CD14-positive monocyte (primary cell): ENCODE measurements at regions of chr19 and their contacts with region 1.

Region 1: GRCh38 chr19:28466107-28467045 is 746.6 kb downstream of the UQCRFS1 start:
- DNase-seq: peak; percentile 50 to 57 (median 55)
- H3K4me3 ChIP-seq: no peak overlapping the region
- H3K4me3 Mint-ChIP-seq: no peak overlapping the region
- H3K27ac ChIP-seq: no peak overlapping the region
- H3K27ac Mint-ChIP-seq: peak overlapping the region in 1 of 7 donors; percentile 24
- H3K4me1 ChIP-seq: peaks cover 14 to 20% of the 10 kb centered on the region in 2 donors
- H3K4me1 Mint-ChIP-seq: peaks cover 27% of the 10 kb centered on the region
- H3K27me3 ChIP-seq: peaks cover 0 to 5% of the 10 kb centered on the region in 2 donors
- H3K27me3 Mint-ChIP-seq: peaks cover 5 to 7% (median 5%) of the 10 kb centered on the region in 3 donors
- CTCF ChIP-seq: peak; percentile 88

Region 2: DNA sequence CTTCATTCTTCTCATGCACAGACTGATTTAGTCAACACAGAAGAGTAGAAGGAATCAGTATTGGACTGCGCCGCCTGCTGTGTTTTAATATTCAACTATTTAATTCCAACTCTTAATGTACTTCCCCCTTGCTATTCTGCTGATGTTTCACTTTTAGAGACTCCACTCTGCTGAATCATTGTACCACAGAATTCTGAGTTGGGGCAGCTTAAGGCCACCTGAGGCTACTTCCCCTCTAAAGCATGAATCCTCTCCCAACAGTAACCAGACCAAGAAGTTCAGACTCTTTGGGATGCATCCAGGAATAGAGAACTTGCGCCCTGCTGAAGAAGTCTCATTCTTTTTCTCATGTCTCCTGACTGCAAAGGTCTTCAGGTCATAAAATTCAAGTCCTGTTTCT is 37.8 kb after region 1 on chr19:
- intact Hi-C with region 1: loop called in 1 of 2 experiments (anchors 5 kb)
- DNase-seq: peak; percentile 32 to 59 (median 54)
- H3K4me3 ChIP-seq: no peak overlapping the region
- H3K4me3 Mint-ChIP-seq: peak overlapping the region in 1 of 2 donors; percentile 40
- H3K27ac ChIP-seq: no peak overlapping the region
- H3K27ac Mint-ChIP-seq: peak overlapping the region in 4 of 7 donors; percentile 7 to 71 (median 38)
- H3K4me1 ChIP-seq: peaks cover 53 to 55% of the 10 kb centered on the region in 2 donors
- H3K4me1 Mint-ChIP-seq: peaks cover 56% of the 10 kb centered on the region
- H3K27me3 ChIP-seq: no peaks in the 10 kb centered on the region
- H3K27me3 Mint-ChIP-seq: peaks cover 4 to 6% (median 5%) of the 10 kb centered on the region in 3 donors
- CTCF ChIP-seq: no peak

Region 3: DNA sequence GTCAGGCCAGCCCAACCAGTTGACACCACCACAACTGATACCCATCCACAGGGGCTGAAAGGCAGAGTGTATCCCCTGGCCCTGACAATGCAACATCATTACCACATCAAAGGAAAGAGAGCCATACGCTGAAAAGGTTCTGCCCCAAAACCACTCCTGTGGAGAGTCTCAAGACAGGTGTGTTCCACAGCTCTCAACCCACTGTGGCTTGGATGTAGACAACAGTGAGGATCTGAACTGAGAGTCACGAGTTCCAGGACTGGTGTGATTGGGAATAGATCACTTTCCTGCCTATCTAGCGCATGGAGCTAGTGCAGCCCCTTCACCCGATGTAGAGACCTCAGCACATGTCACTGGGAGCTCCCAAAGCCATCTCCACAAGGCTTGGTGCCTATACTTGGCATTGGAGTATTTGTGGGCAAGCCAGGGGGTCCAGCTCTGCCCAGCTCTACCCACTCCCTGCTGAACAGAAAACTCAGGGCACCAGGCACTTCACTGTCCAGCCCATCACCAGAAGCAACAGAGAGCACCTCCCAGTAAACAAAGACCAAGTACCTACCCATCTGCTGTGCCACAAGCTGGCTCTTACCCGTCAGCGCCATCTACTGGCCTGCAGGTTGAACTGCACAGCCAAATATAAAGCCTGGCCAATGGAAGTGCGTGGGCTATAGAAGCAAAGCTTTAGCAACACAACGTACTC is 167.1 kb after region 1 on chr19:
- intact Hi-C with region 1: loop called (anchors 2 to 5 kb)
- DNase-seq: peak; percentile 31 to 57 (median 52)
- H3K4me3 ChIP-seq: no peak overlapping the region
- H3K4me3 Mint-ChIP-seq: no peak overlapping the region
- H3K27ac ChIP-seq: no peak overlapping the region
- H3K27ac Mint-ChIP-seq: no peak overlapping the region
- H3K4me1 ChIP-seq: no peaks in the 10 kb centered on the region
- H3K4me1 Mint-ChIP-seq: no peaks in the 10 kb centered on the region
- H3K27me3 ChIP-seq: no peaks in the 10 kb centered on the region
- H3K27me3 Mint-ChIP-seq: peaks cover 0 to 5% (median 2%) of the 10 kb centered on the region in 3 donors
- CTCF ChIP-seq: peak; percentile 98

Region 4: GRCh38 chr19:28705008-28705407 is 238.6 kb after region 1 on chr19:
- intact Hi-C with region 1: loop called (anchors 2 to 5 kb)
- DNase-seq: no peak
- H3K4me3 ChIP-seq: no peak overlapping the region
- H3K4me3 Mint-ChIP-seq: no peak overlapping the region
- H3K27ac ChIP-seq: no peak overlapping the region
- H3K27ac Mint-ChIP-seq: no peak overlapping the region
- H3K4me1 ChIP-seq: no peaks in the 10 kb centered on the region
- H3K4me1 Mint-ChIP-seq: no peaks in the 10 kb centered on the region
- H3K27me3 ChIP-seq: no peaks in the 10 kb centered on the region
- H3K27me3 Mint-ChIP-seq: peaks cover 2 to 4% (median 3%) of the 10 kb centered on the region in 3 donors
- CTCF ChIP-seq: no peak

Region 5: DNA sequence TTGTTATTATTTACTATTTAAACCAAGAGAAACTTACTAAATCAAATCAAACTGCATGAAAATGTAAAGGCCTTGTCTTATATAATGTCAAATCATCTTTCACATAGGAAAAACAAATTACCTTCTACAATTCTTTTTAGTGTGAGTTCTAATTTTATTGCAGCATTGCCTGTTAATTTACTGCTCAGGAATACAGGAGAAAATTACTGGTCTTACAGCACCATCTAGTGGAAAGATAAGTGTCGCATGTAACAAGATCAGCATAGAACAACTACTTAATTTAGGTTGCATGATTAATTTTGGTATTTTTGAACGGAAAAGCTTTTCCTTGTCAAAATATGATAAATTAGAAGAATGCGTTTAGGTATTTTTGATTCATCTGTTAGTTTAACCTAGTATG is 243.9 kb after region 1 on chr19:
- intact Hi-C with region 1: loop called (anchors 2 to 5 kb)
- DNase-seq: peak; percentile 20 to 52 (median 38)
- H3K4me3 ChIP-seq: no peak overlapping the region
- H3K4me3 Mint-ChIP-seq: no peak overlapping the region
- H3K27ac ChIP-seq: no peak overlapping the region
- H3K27ac Mint-ChIP-seq: no peak overlapping the region
- H3K4me1 ChIP-seq: no peaks in the 10 kb centered on the region
- H3K4me1 Mint-ChIP-seq: no peaks in the 10 kb centered on the region
- H3K27me3 ChIP-seq: no peaks in the 10 kb centered on the region
- H3K27me3 Mint-ChIP-seq: peaks cover 1 to 7% (median 5%) of the 10 kb centered on the region in 3 donors
- CTCF ChIP-seq: peak; percentile 79

Region 6: DNA sequence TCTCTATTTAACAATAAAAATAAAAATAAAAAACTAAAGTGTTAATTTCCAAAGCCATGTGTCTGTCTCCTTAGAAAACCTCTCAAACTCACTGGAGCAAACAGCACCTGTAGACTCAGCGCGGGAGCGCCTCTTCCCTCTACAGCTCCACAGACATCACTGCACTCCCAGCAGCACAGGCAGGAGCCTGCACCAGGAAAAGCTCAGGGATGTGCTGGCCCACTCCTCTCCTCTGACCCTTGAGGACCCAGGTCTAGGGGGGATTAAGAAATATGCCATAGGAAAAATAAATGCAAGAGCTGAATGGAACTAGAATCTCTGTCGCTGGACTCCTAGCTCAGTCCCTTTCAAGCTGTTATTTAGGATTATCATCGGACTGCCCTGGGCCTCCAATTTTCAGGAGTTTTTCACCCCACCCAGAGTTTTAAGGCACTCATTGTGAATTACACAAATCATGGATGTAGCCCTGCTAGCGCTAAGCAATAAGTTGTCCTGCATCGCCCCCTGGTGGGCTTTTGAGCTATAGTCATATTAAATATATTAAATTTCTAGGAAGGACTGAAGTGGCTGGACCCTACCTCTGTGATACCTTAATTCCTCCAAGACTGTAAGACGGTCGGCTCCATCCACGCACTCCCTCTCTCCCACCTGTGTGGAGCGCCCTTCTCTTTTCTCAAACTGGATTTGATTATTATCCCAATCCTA is 412.6 kb after region 1 on chr19:
- intact Hi-C with region 1: loop called in 1 of 2 experiments (anchors 2 kb)
- DNase-seq: peak; percentile 19 to 54 (median 39)
- H3K4me3 ChIP-seq: no peak overlapping the region
- H3K4me3 Mint-ChIP-seq: no peak overlapping the region
- H3K27ac ChIP-seq: no peak overlapping the region
- H3K27ac Mint-ChIP-seq: no peak overlapping the region
- H3K4me1 ChIP-seq: no peaks in the 10 kb centered on the region
- H3K4me1 Mint-ChIP-seq: no peaks in the 10 kb centered on the region
- H3K27me3 ChIP-seq: no peaks in the 10 kb centered on the region
- H3K27me3 Mint-ChIP-seq: peaks cover 3 to 8% (median 5%) of the 10 kb centered on the region in 3 donors
- CTCF ChIP-seq: peak; percentile 78